ENCODE measurements at regions of chr12 and their contacts with region 1.

Region 1: GRCh38 chr12:3885277-3886094 is 12.3 kb upstream of the PARP11 start:
- DNase-seq: peak in 4 of 5 donors; percentile 21 to 64 (median 52)
- H3K4me3 ChIP-seq: no peak overlapping the region
- H3K4me3 Mint-ChIP-seq: no peak overlapping the region
- H3K27ac ChIP-seq: no peak overlapping the region
- H3K27ac Mint-ChIP-seq: peak overlapping the region in 5 of 8 donors; percentile 2 to 75 (median 27)
- H3K4me1 ChIP-seq: no peaks in the 10 kb centered on the region
- H3K4me1 Mint-ChIP-seq: peaks cover 4 to 7% (median 6%) of the 10 kb centered on the region in 3 donors
- H3K27me3 ChIP-seq: no peaks in the 10 kb centered on the region
- H3K27me3 Mint-ChIP-seq: peaks cover 2 to 6% of the 10 kb centered on the region in 2 donors

Region 2: DNA sequence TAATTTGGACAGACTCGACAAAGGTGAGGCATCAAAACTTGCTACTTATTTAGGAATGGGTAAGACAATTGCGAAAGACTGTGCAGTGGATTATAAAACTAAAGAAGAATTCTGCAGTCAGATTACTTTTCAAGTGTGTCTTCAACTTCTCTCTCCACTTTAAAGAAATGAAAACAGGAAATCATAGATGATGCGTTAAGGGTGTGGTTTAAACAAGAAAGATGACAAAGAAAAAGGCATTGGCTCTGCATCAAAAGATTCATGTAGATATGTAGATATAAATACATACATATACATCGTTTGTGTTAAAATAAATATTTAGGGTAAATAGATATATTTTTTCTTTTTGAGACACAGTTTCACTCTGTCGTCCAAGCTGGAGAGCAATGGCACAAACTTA is 62.3 kb after region 1 on chr12:
- CTCF ChIA-PET with region 1: interaction called, 13 read pairs
- POLR2A ChIA-PET with region 1: no interaction called
- DNase-seq: peak in 2 of 5 donors; percentile 54 to 81
- H3K4me3 ChIP-seq: no peak overlapping the region
- H3K4me3 Mint-ChIP-seq: peak overlapping the region in 6 of 7 donors; percentile 2 to 47 (median 34)
- H3K27ac ChIP-seq: peak overlapping the region; percentile 38
- H3K27ac Mint-ChIP-seq: peak overlapping the region; percentile 64 to 96 (median 90)
- H3K4me1 ChIP-seq: peaks cover 54% of the 10 kb centered on the region
- H3K4me1 Mint-ChIP-seq: peaks cover 59 to 66% (median 60%) of the 10 kb centered on the region in 3 donors
- H3K27me3 ChIP-seq: no peaks in the 10 kb centered on the region
- H3K27me3 Mint-ChIP-seq: no peaks in the 10 kb centered on the region

Region 3: DNA sequence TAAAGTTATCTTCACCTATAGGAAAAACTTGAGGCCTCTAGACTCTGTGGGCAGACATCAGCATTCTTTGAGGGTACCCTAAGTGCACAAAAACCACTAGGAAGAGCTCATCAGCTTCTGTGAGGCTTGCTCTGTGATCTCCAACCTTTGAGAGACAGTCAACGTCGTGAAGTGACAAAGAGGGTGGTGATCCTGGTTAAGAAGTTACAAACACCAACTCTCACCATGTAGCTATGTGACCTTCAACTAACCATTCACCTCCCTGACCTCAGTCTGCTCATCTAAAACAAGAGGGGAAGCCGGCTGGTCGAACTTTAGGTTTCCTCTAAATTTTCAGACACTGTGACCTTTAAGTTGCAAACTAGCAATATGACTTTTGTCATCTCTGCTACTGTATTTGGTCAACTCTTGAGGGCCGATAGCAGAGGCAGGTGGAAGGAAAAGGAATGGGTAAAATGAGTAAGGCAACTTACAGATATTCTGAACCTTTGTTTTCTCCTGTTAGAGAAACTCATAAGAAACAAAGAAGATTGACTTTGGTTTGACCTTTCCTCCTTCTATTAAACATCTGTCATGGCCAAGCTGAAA is 91.0 kb after region 1 on chr12:
- CTCF ChIA-PET with region 1: interaction called, 10 read pairs
- POLR2A ChIA-PET with region 1: no interaction called
- DNase-seq: peak in 1 of 5 donors; percentile 30
- H3K4me3 ChIP-seq: no peak overlapping the region
- H3K4me3 Mint-ChIP-seq: no peak overlapping the region
- H3K27ac ChIP-seq: no peak overlapping the region
- H3K27ac Mint-ChIP-seq: peak overlapping the region in 4 of 8 donors; percentile 25 to 77 (median 44)
- H3K4me1 ChIP-seq: peaks cover 69% of the 10 kb centered on the region
- H3K4me1 Mint-ChIP-seq: peaks cover 35 to 57% (median 54%) of the 10 kb centered on the region in 3 donors
- H3K27me3 ChIP-seq: no peaks in the 10 kb centered on the region
- H3K27me3 Mint-ChIP-seq: peaks cover 5 to 11% of the 10 kb centered on the region in 2 donors

Region 4: DNA sequence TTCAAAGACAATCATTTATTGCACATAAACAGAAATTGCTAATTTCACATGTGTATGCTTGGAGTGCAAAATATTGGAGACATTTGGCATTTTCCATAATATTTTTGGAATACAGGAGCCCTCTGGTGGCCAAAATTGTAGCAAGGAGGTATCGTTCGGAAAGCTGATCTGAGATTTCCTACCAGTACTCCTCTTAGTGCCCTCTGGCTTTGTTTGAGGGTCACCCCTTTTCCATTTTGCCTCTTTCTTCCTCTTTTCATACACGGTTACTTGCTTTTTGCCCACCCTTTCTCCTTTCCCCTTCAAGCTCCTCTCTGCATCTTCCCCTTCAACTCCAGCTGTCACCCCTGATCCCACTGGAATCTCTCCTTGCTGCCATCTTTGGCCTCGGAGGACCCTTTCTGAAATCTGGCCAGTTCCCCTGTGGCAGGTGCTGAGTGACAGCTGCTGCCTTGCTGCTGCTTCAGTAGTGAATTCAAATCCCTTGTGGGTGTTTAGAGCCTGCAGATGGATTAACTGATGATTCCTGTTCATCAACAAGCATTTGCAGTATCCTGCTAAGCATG is 152.3 kb after region 1 on chr12:
- CTCF ChIA-PET with region 1: interaction called, 50 read pairs
- POLR2A ChIA-PET with region 1: no interaction called
- DNase-seq: peak in 1 of 5 donors; percentile 5
- H3K4me3 ChIP-seq: no peak overlapping the region
- H3K4me3 Mint-ChIP-seq: no peak overlapping the region
- H3K27ac ChIP-seq: no peak overlapping the region
- H3K27ac Mint-ChIP-seq: peak overlapping the region in 1 of 8 donors; percentile 87
- H3K4me1 ChIP-seq: no peaks in the 10 kb centered on the region
- H3K4me1 Mint-ChIP-seq: peaks cover 0 to 2% (median 0%) of the 10 kb centered on the region in 3 donors
- H3K27me3 ChIP-seq: no peaks in the 10 kb centered on the region
- H3K27me3 Mint-ChIP-seq: peaks cover 0 to 5% of the 10 kb centered on the region in 2 donors

Measured in CD8-positive, alpha-beta memory T cell (primary cell).